ENCODE measurements at regions of chr15 and their contacts with region 1.

Region 1: DNA sequence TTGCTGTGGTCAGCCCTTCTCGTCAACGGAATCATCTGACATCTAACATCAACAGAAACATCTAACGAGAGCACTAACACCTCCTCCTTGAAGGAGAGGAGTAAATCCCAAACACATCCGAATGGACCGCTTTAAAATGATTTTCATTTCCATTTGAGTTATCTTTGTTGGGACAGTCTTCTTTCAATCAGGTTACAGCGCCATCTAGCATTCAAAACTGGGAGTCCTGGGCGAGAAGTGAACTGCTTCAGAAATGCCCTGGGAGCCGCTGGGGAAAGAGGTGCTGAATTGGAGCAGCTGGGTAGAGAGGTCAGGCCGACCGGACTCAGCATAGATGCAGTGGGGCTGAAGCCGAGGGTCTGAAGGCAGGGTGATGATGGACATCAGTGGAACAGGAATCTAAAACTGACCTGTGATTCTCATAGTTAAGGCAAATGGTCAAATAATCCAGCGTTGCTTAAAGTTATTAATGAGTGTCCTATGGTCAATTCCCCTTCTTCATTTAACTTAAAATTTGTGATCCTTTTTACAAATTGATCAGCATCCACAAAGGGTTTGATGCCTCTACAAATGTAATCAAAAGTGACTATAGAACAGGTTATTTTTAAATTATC is 170.0 kb upstream of the NDN start:
- DNase-seq: peak; percentile 52
- ATAC-seq: peak; percentile 53; the same call in 1 of the 2 replicates
- H3K4me3 ChIP-seq: no peak overlapping the region
- H3K27ac ChIP-seq: no peak overlapping the region
- H3K4me1 ChIP-seq: no peaks in the 10 kb centered on the region
- H3K27me3 ChIP-seq: no peaks in the 10 kb centered on the region
- CTCF ChIP-seq: peak; percentile 61

Region 2: DNA sequence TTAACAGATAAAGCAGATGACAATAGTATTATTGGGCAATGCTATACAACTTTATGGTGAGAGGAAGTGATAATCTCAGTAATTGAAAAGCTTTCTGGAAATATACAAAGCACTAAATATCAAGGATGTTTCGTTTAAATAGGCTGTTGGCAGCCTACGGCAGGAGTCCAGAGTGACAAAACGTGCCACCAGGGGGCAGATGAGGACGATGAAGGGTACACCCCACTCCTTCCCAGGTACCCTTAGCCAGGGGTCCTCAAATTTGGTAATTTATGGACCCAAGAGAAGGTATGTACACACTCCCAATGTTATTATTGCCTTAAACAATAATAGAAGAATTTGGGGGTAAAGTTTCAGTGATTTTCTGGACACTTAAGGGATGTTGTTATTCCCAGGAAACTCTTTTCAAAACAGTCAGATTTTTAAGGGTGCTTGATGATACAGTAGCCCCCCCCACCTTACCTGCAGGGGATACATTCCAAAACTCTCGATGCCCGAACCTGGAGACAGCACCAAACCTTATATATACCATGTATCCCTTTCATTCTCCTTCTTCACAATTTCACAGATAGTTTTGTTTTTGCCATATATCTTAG is 208.1 kb before region 1 on chr15:
- CTCF ChIA-PET with region 1: no interaction called
- POLR2A ChIA-PET with region 1: no interaction called
- intact Hi-C with region 1: loop called (anchors 5 kb)
- DNase-seq: peak; percentile 41
- ATAC-seq: peak; percentile 48; the same call in 1 of the 2 replicates
- H3K4me3 ChIP-seq: no peak overlapping the region
- H3K27ac ChIP-seq: no peak overlapping the region
- H3K4me1 ChIP-seq: no peaks in the 10 kb centered on the region
- H3K27me3 ChIP-seq: peaks cover 41% of the 10 kb centered on the region
- CTCF ChIP-seq: peak; percentile 71

Region 3: DNA sequence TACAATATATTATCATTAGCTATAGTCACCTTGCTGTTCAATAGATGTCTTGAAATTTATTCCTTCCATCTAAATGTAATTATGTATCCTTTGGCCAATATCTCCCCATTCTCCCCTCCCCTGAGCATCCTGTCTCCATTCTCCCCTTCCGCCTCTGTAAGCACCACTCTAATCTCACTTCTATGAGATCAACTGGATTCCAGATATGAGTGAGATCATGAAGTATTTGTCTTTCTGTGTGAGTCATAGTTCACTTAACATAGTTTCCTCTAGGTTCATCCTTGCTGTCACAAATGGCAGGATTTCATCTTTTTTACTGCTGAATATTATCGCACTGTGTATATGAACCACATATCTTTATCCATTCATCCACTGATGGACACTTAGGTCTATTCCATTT is 21.2 kb before region 1 on chr15:
- CTCF ChIA-PET with region 1: no interaction called
- POLR2A ChIA-PET with region 1: no interaction called
- intact Hi-C with region 1: no loop called
- DNase-seq: no peak
- ATAC-seq: no peak
- H3K4me3 ChIP-seq: no peak overlapping the region
- H3K27ac ChIP-seq: no peak overlapping the region
- H3K4me1 ChIP-seq: no peaks in the 10 kb centered on the region
- H3K27me3 ChIP-seq: no peaks in the 10 kb centered on the region
- CTCF ChIP-seq: no peak

Region 4: GRCh38 chr15:23890215-23890614 is 33.1 kb after region 1 on chr15:
- CTCF ChIA-PET with region 1: no interaction called
- POLR2A ChIA-PET with region 1: no interaction called
- intact Hi-C with region 1: no loop called
- DNase-seq: no peak
- ATAC-seq: no peak
- H3K4me3 ChIP-seq: no peak overlapping the region
- H3K27ac ChIP-seq: no peak overlapping the region
- H3K4me1 ChIP-seq: no peaks in the 10 kb centered on the region
- H3K27me3 ChIP-seq: no peaks in the 10 kb centered on the region
- CTCF ChIP-seq: no peak

Measured in PC-3 (cell line).